Activated CD8-positive, alpha-beta T cell treated with anti-CD3 and anti-CD28 coated beads for 36 hours (primary cell): ENCODE measurements at regions of chr3 and their contacts with region 1.

Region 1: GRCh38 chr3:120348981-120349818 is at the start of gene LRRC58:
- DNase-seq: peak; percentile 90
- ATAC-seq: peak; percentile 93
- H3K4me3 Mint-ChIP-seq: peak within 1 kb of the TSS; percentile 93
- H3K27ac Mint-ChIP-seq: peak within 1 kb of the TSS; percentile 95
- H3K4me1 Mint-ChIP-seq: peaks cover 43% of the 10 kb centered on the region
- H3K27me3 Mint-ChIP-seq: peaks cover 7% of the 10 kb centered on the region
- CTCF ChIP-seq: no peak
- total RNA-seq, gene LRRC58: 29.1 to 30.7 TPM

Region 2: GRCh38 chr3:119990888-119991287 is 358.3 kb before region 1 on chr3:
- CTCF ChIA-PET with region 1: no interaction called
- POLR2A ChIA-PET with region 1: no interaction called
- intact Hi-C with region 1: no loop called
- DNase-seq: no peak
- ATAC-seq: no peak
- H3K4me3 Mint-ChIP-seq: no peak overlapping the region
- H3K27ac Mint-ChIP-seq: no peak overlapping the region
- H3K4me1 Mint-ChIP-seq: peaks cover 27% of the 10 kb centered on the region
- H3K27me3 Mint-ChIP-seq: no peaks in the 10 kb centered on the region
- CTCF ChIP-seq: no peak

Region 3: GRCh38 chr3:120095226-120095978 is 253.8 kb before region 1 on chr3:
- CTCF ChIA-PET with region 1: no interaction called
- POLR2A ChIA-PET with region 1: interaction called, 6 read pairs
- intact Hi-C with region 1: loop called (anchors 10 kb)
- DNase-seq: peak; percentile 94
- ATAC-seq: peak; percentile 39
- H3K4me3 Mint-ChIP-seq: no peak overlapping the region
- H3K27ac Mint-ChIP-seq: no peak overlapping the region
- H3K4me1 Mint-ChIP-seq: peaks cover 19% of the 10 kb centered on the region
- H3K27me3 Mint-ChIP-seq: no peaks in the 10 kb centered on the region
- CTCF ChIP-seq: no peak

Region 4: DNA sequence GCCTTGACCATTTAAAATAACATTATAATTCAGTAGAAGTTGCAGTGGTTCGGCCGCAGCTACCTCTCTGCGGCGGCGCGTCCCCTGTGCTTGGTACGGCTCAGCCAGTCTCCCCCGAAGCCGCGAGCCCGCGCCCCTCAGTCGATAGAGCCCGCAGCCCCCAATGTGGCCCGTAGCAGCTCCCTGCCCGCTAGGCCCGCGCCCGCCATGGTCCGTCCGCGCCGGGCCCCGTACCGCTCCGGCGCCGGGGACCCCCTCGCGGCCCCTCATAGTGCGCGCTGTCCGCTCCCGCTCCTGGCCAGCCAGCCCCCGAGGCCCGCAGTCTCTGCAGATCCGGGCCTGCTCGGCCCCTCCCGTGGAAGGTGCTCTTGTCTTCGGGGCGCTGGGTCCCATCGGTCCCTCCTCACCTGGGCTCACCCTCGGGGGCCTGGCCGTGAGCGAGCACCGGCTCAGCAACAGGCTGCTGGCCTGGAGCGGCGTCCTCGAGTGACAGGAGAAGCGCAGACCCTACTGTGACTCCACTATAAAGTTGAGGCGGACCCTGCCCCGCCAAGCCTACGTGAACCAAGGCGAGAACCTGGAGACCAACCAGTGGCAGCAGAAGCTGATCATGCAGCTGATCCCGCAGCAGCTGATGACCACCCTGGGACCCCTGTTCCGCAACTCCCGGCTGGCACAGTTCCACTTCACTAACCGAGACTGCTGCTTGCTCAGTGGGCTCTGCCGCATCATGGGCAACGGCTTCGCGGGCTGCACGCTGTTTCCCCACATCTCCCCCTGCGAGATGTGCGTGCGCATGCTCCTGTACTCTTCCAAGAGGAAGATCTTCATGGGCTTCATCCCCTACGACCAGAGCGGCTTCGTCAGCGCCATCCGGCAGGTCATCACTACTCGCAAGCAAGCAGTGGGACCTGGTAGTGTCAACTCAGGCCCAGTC is 42.4 kb before region 1 on chr3:
- CTCF ChIA-PET with region 1: no interaction called
- POLR2A ChIA-PET with region 1: interaction called, 4 read pairs
- intact Hi-C with region 1: loop called (anchors 2 kb)
- DNase-seq: no peak
- ATAC-seq: no peak
- H3K4me3 Mint-ChIP-seq: no peak overlapping the region
- H3K27ac Mint-ChIP-seq: no peak overlapping the region
- H3K4me1 Mint-ChIP-seq: no peaks in the 10 kb centered on the region
- H3K27me3 Mint-ChIP-seq: peaks cover 3% of the 10 kb centered on the region
- CTCF ChIP-seq: no peak

Region 5: DNA sequence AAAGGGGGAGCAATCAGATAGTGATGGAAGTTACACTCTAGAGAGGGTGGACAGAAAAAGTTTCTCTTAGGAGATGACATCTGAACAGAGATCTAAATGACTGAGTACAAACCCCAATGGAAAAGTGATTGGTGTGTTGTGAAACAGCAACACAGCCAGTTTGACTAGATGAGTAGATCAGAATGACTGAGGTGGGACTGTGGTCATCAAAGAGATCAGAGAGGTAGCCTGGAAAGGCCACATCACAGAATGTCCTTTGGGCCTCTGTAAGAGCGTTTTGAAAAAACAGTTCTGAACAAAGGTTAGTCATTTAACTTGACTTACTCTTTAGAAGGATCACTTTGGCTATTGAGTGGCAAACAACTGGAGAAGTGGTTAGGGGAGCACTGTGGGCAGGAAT is 10.7 kb before region 1 on chr3:
- CTCF ChIA-PET with region 1: interaction called, 3 read pairs
- POLR2A ChIA-PET with region 1: interaction called, 11 read pairs
- intact Hi-C with region 1: no loop called
- DNase-seq: peak; percentile 40
- ATAC-seq: peak; percentile 90
- H3K4me3 Mint-ChIP-seq: no peak overlapping the region
- H3K27ac Mint-ChIP-seq: peak overlapping the region; percentile 27
- H3K4me1 Mint-ChIP-seq: peaks cover 43% of the 10 kb centered on the region
- H3K27me3 Mint-ChIP-seq: no peaks in the 10 kb centered on the region
- CTCF ChIP-seq: no peak